OCI-LY7 (cell line): ENCODE measurements at regions of chr19 and their contacts with region 1.

Region 1: GRCh38 chr19:37313335-37313627 is 57.6 kb upstream of the ZNF527 start:
- DNase-seq: no peak
- H3K4me3 ChIP-seq: no peak overlapping the region
- H3K27ac ChIP-seq: no peak overlapping the region
- H3K4me1 ChIP-seq: no peaks in the 10 kb centered on the region
- CTCF ChIP-seq: no peak

Region 2: GRCh38 chr19:36652958-36653357 is 660.3 kb before region 1 on chr19:
- CTCF ChIA-PET with region 1: no interaction called
- POLR2A ChIA-PET with region 1: no interaction called
- intact Hi-C with region 1: no loop called
- DNase-seq: no peak
- H3K4me3 ChIP-seq: no peak overlapping the region
- H3K27ac ChIP-seq: no peak overlapping the region
- H3K4me1 ChIP-seq: no peaks in the 10 kb centered on the region
- CTCF ChIP-seq: no peak

Region 3: DNA sequence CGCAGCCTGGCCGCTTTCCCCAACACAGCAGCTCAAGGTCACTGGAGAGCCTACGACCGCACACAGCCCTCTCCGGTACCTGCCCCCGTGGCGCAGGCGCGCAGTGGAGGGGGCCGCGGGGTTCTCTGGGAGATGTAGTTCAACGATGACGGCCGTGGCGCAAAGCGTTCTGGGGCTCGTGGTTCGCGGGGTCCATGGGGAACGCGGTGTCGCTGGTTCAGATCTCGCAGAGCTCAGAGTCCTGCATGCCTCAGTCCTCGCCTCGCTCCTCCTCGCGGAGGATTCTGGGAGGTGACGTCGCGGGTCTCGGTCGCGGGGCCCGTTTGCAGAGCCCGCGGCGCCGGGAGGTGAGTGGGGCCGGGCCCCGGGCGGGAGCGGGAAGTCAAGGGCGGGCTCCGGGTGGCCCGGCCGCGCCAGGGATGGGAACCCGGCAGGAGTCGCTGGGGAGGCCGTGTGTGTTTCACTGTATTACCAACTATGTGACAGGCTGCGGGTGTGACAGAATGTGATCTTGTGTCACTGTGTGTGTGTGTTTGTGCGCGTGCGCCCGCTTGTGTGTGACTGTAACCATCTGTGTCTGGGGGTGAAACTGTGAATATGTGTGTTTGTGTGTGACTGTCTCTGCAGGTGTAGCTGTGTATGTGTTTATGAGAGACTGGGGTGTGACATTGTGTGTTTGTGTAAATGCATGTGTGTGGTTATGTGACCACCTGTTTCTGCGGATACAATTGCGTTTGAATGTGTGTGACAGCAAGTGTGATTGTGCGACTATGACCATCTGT is 57.8 kb after region 1 on chr19 and contains the start of gene ZNF527:
- CTCF ChIA-PET with region 1: no interaction called
- POLR2A ChIA-PET with region 1: interaction called, 3 read pairs
- intact Hi-C with region 1: loop called (anchors 2 kb)
- DNase-seq: peak; percentile 98
- H3K4me3 ChIP-seq: peak within 1 kb of the TSS; percentile 71
- H3K27ac ChIP-seq: peak within 1 kb of the TSS; percentile 46
- H3K4me1 ChIP-seq: peaks cover 4% of the 10 kb centered on the region
- CTCF ChIP-seq: no peak; the same call in 1 of the 2 replicates
- total RNA-seq, gene ZNF527: 7.9 and 9.2 TPM in 2 replicates